Tibial artery (tissue), 4 donors: ENCODE measurements at regions of chr12 and their contacts with region 1.

Region 1: GRCh38 chr12:96878704-96879103 is 28.4 kb upstream of the NEDD1 start:
- DNase-seq: no peak
- H3K4me3 ChIP-seq: no peak overlapping the region
- H3K27ac ChIP-seq: no peak overlapping the region
- H3K4me1 ChIP-seq: no peaks in the 10 kb centered on the region
- H3K27me3 ChIP-seq: no peaks in the 10 kb centered on the region
- CTCF ChIP-seq: no peak

Region 2: DNA sequence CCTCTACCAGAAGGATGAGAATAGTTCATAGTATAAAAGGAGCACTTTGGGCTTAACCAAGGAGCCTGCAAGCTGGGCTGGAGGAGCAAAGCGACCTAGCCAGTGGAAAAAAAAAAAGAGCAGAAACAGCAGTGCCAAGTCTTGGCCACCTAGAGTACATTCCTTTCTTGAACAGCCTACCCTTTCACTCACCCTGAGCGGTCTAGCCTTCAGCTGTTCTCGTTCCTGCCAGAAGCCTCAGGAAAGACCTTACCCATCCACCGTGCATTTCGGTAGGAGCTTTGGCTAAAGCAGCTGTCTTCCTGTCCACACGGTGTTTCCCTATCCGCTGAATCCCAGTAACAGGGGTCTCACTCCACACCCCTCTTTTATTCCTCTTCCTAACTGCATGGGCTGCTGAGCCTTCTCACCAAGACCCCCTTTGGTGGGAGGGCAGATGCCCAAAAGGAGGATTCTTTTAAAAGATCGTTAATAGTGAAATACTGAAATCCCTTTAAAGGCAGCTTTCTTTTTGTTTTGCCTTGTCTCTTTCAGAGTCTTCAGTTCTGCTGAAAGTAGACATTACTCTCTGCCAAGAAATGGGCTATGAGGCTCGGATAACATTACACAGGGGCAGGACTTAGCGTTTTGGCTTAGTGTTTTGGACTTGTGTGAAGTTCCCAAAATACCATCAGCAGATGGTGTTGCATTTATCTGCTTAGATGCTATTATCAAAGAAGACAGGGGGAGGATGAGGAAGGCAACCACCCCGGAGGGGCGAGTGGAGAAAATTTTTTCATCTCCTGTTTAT is 1493.3 kb before region 1 on chr12:
- intact Hi-C with region 1: loop called (anchors 5 kb)
- DNase-seq: peak in 1 of 2 donors; percentile 69
- H3K4me3 ChIP-seq: peak overlapping the region; percentile 45 to 50
- H3K27ac ChIP-seq: peak overlapping the region; percentile 79 to 84
- H3K4me1 ChIP-seq: peaks cover 0 to 43% (median 16%) of the 10 kb centered on the region in 4 donors
- H3K27me3 ChIP-seq: no peaks in the 10 kb centered on the region
- CTCF ChIP-seq: peak in 1 of 2 experiments; percentile 15

Region 3: DNA sequence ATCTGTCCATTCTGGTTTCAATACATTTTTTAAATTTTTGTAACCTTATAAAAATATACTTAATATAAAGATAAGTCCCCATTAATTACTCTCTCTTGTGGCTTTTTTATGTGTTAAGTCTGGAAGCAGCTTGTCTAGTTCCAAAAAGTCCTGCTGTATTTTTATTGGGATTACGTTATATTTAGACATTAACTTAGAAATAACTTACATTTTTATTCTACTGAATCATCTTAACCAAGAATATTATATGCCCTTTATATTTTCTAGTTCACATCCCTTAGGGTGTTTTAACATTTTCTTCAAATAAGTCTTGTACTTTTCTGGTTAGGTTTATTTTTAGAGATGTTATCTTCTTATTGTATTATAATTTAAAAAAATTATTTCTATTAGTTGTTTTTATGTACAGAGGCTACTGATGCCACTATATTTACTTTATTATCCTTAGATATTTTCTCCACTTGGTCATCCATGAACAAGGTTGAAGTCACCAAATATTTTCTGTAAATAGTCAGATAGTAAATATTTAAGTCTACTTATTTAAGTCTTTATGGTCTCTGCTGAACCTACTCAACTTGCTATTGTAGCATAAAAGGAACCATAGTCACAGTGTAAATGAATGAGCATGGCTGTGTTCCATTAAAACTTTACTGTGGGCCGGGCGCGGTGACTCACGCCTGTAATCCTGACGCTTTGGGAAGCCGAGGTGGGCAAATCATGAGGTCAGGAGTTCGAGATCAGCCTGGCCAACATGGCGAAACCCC is 104.0 kb before region 1 on chr12:
- intact Hi-C with region 1: no loop called
- DNase-seq: no peak
- H3K4me3 ChIP-seq: no peak overlapping the region
- H3K27ac ChIP-seq: no peak overlapping the region
- H3K4me1 ChIP-seq: no peaks in the 10 kb centered on the region
- H3K27me3 ChIP-seq: no peaks in the 10 kb centered on the region
- CTCF ChIP-seq: no peak